ENCODE measurements at regions of chr2 and their contacts with region 1.

Region 1: GRCh38 chr2:218852911-218853667 is 6.5 kb upstream of the WNT6 start:
- DNase-seq: no peak
- ATAC-seq: peak; percentile 63 to 84 (median 78)
- H3K4me3 ChIP-seq: no peak overlapping the region
- H3K27ac ChIP-seq: no peak overlapping the region
- H3K4me1 ChIP-seq: no peaks in the 10 kb centered on the region
- H3K27me3 ChIP-seq: peaks cover 0 to 4% of the 10 kb centered on the region in 2 donors
- CTCF ChIP-seq: peak; percentile 52 to 69 (median 62)
- POLR2A ChIP-seq: no peak

Region 2: GRCh38 chr2:218568190-218569037 is 284.7 kb before region 1 on chr2 and contains the starts of genes CNOT9 and USP37:
- intact Hi-C with region 1: no loop called
- DNase-seq: peak; percentile 100
- ATAC-seq: peak; percentile 94 to 99 (median 96)
- H3K4me3 ChIP-seq: peak within 1 kb of the TSS; percentile 72 to 90 (median 88)
- H3K27ac ChIP-seq: peak within 1 kb of the TSS; percentile 84 to 92 (median 88)
- H3K4me1 ChIP-seq: peaks cover 0 to 22% (median 7%) of the 10 kb centered on the region in 4 donors
- H3K27me3 ChIP-seq: no peaks in the 10 kb centered on the region
- CTCF ChIP-seq: no peak
- POLR2A ChIP-seq: peak; percentile 75
- total RNA-seq, gene CNOT9: 11.8 to 39.3 (median 19.2) TPM
- total RNA-seq, gene USP37: 4.8 to 8.9 (median 6.7) TPM

Region 3: DNA sequence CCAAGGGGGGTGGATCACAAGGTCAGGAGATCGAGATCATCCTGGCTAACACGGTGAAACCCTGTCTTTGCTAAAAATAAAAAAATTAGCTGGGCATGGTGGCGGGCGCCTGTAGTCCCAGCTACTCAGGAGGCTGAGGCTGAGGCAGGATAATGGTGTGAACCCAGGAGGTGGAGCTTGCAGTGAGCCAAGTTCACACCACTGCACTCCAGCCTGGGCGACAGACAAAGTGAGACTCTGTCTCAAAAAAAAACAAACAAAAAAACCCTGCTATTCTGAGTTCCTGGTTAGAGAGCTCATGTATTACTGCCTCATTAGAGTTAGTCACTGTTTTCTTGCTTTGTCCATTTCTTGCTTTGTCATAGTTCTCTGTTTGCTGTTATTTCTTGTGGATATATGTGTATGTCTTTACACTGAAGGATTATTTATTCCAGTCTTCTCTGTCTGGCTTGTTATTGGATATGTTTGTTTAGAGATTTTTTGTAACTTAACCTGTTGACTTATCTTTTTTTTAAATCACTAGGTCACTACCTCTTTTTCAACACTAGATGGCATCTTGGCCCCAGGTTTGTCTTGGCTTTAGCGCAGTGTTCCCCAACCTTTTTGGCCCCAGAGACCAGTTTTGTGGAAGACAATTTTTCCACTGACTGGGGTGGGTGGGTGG is 125.5 kb before region 1 on chr2:
- intact Hi-C with region 1: loop called in 1 of 2 experiments (anchors 10 kb)
- DNase-seq: no peak
- ATAC-seq: peak in 3 of 4 donors; percentile 16 to 62 (median 41)
- H3K4me3 ChIP-seq: no peak overlapping the region
- H3K27ac ChIP-seq: no peak overlapping the region
- H3K4me1 ChIP-seq: peaks cover 3 to 16% (median 10%) of the 10 kb centered on the region in 4 donors
- H3K27me3 ChIP-seq: no peaks in the 10 kb centered on the region
- CTCF ChIP-seq: peak; percentile 27 to 65 (median 50)
- POLR2A ChIP-seq: no peak

Measured in right lobe of liver (tissue), 6 donors.